Naive thymus-derived CD4-positive, alpha-beta T cell (primary cell): ENCODE measurements at regions of chr2 and their contacts with region 1.

Region 1: DNA sequence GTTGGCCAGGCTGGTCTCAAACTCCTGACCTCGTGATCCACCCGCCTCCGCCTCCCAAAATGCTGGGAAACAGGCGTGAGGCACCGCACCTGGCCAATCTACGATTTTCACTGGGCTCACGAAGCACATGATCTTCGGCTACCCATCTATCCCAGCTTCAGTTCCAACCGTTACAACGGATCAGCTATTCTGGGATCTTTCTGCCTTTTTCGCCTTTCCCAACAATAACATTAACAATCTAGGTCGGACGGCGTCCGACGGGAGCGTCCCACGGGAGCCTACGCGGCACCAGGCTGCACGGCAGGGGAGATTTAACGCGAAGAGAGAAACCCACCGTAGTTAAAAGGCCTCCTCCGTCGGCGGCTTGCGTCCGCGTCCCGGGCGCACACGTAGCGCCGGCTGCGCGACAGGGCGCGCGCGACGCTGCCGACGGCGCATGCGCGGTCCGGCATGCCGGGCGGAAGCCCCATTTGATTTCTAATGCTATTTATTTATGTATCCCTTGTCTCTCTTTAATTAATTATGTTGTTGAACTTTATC is at the start of gene MSL3B:
- DNase-seq: peak; percentile 43 to 69 (median 63)
- ATAC-seq: peak; percentile 68
- H3K4me3 ChIP-seq: peak within 1 kb of the TSS; percentile 73
- H3K4me3 Mint-ChIP-seq: peak within 1 kb of the TSS; percentile 83 to 98 (median 92)
- H3K27ac ChIP-seq: peak within 1 kb of the TSS; percentile 56
- H3K27ac Mint-ChIP-seq: peak within 1 kb of the TSS; percentile 68 to 95 (median 86)
- H3K4me1 ChIP-seq: no peaks in the 10 kb centered on the region
- H3K4me1 Mint-ChIP-seq: peaks cover 3 to 29% (median 8%) of the 10 kb centered on the region in 7 donors
- H3K27me3 ChIP-seq: no peaks in the 10 kb centered on the region
- H3K27me3 Mint-ChIP-seq: peaks cover 23 to 34% (median 33%) of the 10 kb centered on the region in 5 donors

Region 2: GRCh38 chr2:233714121-233714520 is 153.9 kb before region 1 on chr2:
- CTCF ChIA-PET with region 1: no interaction called
- POLR2A ChIA-PET with region 1: no interaction called
- intact Hi-C with region 1: no loop called
- DNase-seq: no peak
- ATAC-seq: no peak
- H3K4me3 ChIP-seq: no peak overlapping the region
- H3K4me3 Mint-ChIP-seq: no peak overlapping the region
- H3K27ac ChIP-seq: no peak overlapping the region
- H3K27ac Mint-ChIP-seq: no peak overlapping the region
- H3K4me1 ChIP-seq: no peaks in the 10 kb centered on the region
- H3K4me1 Mint-ChIP-seq: peaks cover 0 to 5% (median 0%) of the 10 kb centered on the region in 7 donors
- H3K27me3 ChIP-seq: peaks cover 0 to 3% of the 10 kb centered on the region in 2 donors
- H3K27me3 Mint-ChIP-seq: peaks cover 15 to 50% (median 45%) of the 10 kb centered on the region in 5 donors

Region 3: DNA sequence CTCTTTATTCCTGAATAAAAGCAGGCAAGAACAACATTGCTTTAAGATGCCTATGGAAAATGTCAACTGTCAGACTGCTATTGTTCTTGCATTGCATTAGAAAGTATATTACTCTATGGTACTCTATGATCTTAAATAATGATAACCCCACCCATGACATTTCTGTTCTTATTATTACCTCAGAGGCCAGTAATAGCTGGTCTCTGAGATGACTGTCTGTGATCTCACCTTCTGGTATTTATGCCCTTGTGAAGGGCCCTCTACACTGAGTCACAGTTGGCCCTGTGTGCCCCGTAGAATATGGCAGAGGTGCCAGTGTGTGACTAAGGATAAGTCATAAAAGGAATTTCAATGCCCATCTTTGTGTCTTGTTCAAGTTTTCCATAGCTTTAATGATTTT is 243.5 kb after region 1 on chr2:
- CTCF ChIA-PET with region 1: no interaction called
- POLR2A ChIA-PET with region 1: no interaction called
- intact Hi-C with region 1: loop called in 1 of 2 experiments (anchors 5 kb)
- DNase-seq: no peak
- ATAC-seq: no peak
- H3K4me3 ChIP-seq: no peak overlapping the region
- H3K4me3 Mint-ChIP-seq: no peak overlapping the region
- H3K27ac ChIP-seq: no peak overlapping the region
- H3K27ac Mint-ChIP-seq: no peak overlapping the region
- H3K4me1 ChIP-seq: no peaks in the 10 kb centered on the region
- H3K4me1 Mint-ChIP-seq: no peaks in the 10 kb centered on the region
- H3K27me3 ChIP-seq: no peaks in the 10 kb centered on the region
- H3K27me3 Mint-ChIP-seq: peaks cover 0 to 51% (median 4%) of the 10 kb centered on the region in 5 donors